ENCODE measurements at regions of chr13 and their contacts with region 1.

Region 1: GRCh38 chr13:40974460-40975407 is 44.4 kb downstream of the ELF1 start:
- DNase-seq: no peak
- ATAC-seq: peak; percentile 89
- H3K4me3 Mint-ChIP-seq: peak overlapping the region; percentile 72
- H3K27ac Mint-ChIP-seq: peak overlapping the region; percentile 59
- H3K4me1 Mint-ChIP-seq: peaks cover 97% of the 10 kb centered on the region
- H3K27me3 Mint-ChIP-seq: no peaks in the 10 kb centered on the region
- CTCF ChIP-seq: no peak

Region 2: DNA sequence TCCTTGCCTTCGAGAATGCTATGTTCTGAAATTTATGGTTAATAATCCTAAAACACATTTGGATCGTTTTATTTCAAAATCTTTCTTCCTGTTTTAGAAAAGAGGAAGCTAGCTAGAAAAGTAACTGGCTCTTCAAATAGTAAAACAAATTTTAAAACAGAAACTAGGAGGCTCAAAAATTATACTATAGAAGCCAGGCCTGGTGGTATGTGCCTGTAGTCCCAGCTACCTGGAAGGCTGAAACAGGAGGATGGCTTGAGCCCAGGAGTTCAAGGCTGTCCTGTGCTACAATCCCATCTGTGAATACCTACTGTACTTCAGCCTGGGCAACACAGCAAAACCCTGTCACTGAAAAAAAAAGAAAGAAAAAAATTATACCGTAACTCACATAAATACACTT is 13.5 kb before region 1 on chr13:
- CTCF ChIA-PET with region 1: interaction called, 8 read pairs
- POLR2A ChIA-PET with region 1: interaction called, 3 read pairs
- intact Hi-C with region 1: loop called (anchors 1 kb)
- DNase-seq: no peak
- ATAC-seq: peak; percentile 75
- H3K4me3 Mint-ChIP-seq: peak overlapping the region; percentile 73
- H3K27ac Mint-ChIP-seq: peak overlapping the region; percentile 83
- H3K4me1 Mint-ChIP-seq: peaks cover 76% of the 10 kb centered on the region
- H3K27me3 Mint-ChIP-seq: no peaks in the 10 kb centered on the region
- CTCF ChIP-seq: no peak

Region 3: DNA sequence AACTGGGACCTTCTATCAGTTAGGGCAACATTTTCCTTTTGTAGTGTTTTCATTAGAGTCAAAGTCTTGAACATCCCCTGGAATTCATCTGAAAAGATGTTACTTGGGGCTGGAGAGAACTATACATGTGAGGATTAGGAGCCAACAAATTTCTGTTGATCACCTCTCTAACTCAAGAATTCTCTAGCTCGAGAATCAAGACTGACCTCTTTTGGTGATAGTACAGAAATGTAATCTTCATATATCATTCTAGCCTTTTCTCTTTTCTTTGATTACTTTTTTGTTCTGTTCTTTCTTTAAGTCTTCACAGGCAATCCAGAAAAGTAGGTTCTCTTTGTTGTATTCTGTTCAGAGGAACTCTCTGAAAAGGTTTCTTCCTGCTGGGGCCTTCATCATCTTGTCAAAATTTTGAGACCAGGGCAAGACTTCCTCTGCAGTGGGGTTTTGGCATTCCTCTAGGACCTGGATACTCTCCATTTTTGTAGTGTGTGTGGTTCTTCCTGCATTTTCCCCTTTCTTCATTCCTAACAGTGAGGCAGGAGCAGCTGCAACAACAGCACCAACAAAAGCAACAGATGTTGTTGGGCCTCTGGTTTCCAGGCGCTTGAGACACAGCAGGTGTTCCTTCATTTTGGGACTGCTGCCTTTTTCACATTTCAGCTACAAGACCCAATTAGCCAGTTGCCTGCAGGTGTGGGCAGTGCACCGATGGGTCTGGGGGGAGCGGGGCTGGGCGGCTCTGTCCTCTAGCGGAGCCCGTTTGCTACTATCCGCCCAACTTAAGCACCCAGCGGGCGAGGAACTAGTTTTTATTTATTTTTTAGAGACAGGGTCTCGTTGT is 18.2 kb after region 1 on chr13:
- CTCF ChIA-PET with region 1: interaction called, 13 read pairs
- POLR2A ChIA-PET with region 1: interaction called, 5 read pairs
- intact Hi-C with region 1: loop called (anchors 1 kb)
- DNase-seq: no peak
- ATAC-seq: no peak
- H3K4me3 Mint-ChIP-seq: no peak overlapping the region
- H3K27ac Mint-ChIP-seq: peak overlapping the region; percentile 60
- H3K4me1 Mint-ChIP-seq: peaks cover 84% of the 10 kb centered on the region
- H3K27me3 Mint-ChIP-seq: no peaks in the 10 kb centered on the region
- CTCF ChIP-seq: no peak

Region 4: GRCh38 chr13:41019011-41019487 is 44.3 kb after region 1 on chr13 and contains the start of gene ELF1:
- CTCF ChIA-PET with region 1: interaction called, 10 read pairs
- POLR2A ChIA-PET with region 1: interaction called, 6 read pairs
- intact Hi-C with region 1: loop called (anchors 2 kb)
- DNase-seq: peak; percentile 26
- ATAC-seq: peak; percentile 87
- H3K4me3 Mint-ChIP-seq: peak within 1 kb of the TSS; percentile 94
- H3K27ac Mint-ChIP-seq: peak within 1 kb of the TSS; percentile 99
- H3K4me1 Mint-ChIP-seq: peaks cover 46% of the 10 kb centered on the region
- H3K27me3 Mint-ChIP-seq: no peaks in the 10 kb centered on the region
- CTCF ChIP-seq: no peak
- total RNA-seq, gene ELF1: 129 and 136 TPM in 2 replicates

Region 5: GRCh38 chr13:41054212-41054877 is 79.6 kb after region 1 on chr13:
- CTCF ChIA-PET with region 1: interaction called, 36 read pairs
- POLR2A ChIA-PET with region 1: interaction called, 5 read pairs
- intact Hi-C with region 1: loop called (anchors 1 kb)
- DNase-seq: no peak
- ATAC-seq: peak; percentile 33
- H3K4me3 Mint-ChIP-seq: peak overlapping the region; percentile 68
- H3K27ac Mint-ChIP-seq: peak overlapping the region; percentile 80
- H3K4me1 Mint-ChIP-seq: peaks cover 58% of the 10 kb centered on the region
- H3K27me3 Mint-ChIP-seq: no peaks in the 10 kb centered on the region
- CTCF ChIP-seq: peak; percentile 76